Activated CD4-positive, alpha-beta T cell treated with anti-CD3 and anti-CD28 coated beads, Interleukin-2, amount 10 ng/mL, durations not matched to agents 7 days and 5 days (primary cell): ENCODE measurements at regions of chr1 and their contacts with region 1.

Region 1: GRCh38 chr1:15948091-15948591 is 27.8 kb downstream of the ZBTB17 start:
- DNase-seq: no peak
- H3K4me3 Mint-ChIP-seq: no peak overlapping the region
- H3K27ac Mint-ChIP-seq: peak overlapping the region; percentile 16
- H3K4me1 Mint-ChIP-seq: peaks cover 51% of the 10 kb centered on the region
- H3K27me3 Mint-ChIP-seq: no peaks in the 10 kb centered on the region

Region 2: DNA sequence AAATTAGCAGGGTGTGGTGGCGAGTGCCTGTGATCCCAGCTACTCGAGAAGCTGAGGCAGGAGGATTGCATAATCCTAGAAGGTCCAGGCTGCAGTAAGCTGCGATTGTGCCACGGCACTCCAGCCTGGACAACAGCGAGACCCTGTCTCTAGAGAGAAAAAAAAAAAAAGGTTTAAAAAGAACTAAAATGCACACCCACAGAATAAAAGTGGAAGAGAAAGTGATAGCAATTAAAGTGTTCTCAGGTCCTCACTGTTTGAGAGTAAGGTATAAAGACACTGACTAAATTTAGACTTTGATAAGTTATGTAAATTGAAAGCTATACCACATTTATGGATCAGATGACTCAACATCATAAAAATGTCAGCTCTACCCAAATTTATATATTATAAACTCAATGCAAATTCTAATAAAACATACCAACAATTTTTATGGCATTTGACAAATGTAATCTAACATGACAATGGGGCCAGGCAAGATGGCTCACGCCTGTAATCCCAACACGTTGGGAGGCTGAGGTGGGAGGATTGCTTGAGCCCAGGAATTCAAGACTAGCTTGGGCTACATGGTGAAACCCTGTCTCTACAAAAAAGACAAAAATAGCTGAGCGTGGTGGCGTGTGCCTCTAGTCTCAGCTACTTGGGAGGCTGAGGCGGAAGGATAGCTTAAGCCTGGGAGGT is 16.0 kb after region 1 on chr1:
- CTCF ChIA-PET with region 1: interaction called, 4 read pairs
- POLR2A ChIA-PET with region 1: interaction called, 13 read pairs
- DNase-seq: no peak
- H3K4me3 Mint-ChIP-seq: peak overlapping the region; percentile 26
- H3K27ac Mint-ChIP-seq: peak overlapping the region; percentile 77
- H3K4me1 Mint-ChIP-seq: peaks cover 65% of the 10 kb centered on the region
- H3K27me3 Mint-ChIP-seq: no peaks in the 10 kb centered on the region